Cardiac septum (tissue), 1 donor: ENCODE measurements at regions of chr4 and their contacts with region 1.

Region 1: GRCh38 chr4:101724093-101724492 is 66.4 kb upstream of the BANK1 start:
- DNase-seq: no peak

Region 2: GRCh38 chr4:101356928-101357327 is 367.2 kb before region 1 on chr4:
- intact Hi-C with region 1: loop called (anchors 10 kb)
- DNase-seq: no peak

Region 3: GRCh38 chr4:101693842-101694398 is 30.2 kb before region 1 on chr4:
- intact Hi-C with region 1: no loop called
- DNase-seq: no peak

Region 4: DNA sequence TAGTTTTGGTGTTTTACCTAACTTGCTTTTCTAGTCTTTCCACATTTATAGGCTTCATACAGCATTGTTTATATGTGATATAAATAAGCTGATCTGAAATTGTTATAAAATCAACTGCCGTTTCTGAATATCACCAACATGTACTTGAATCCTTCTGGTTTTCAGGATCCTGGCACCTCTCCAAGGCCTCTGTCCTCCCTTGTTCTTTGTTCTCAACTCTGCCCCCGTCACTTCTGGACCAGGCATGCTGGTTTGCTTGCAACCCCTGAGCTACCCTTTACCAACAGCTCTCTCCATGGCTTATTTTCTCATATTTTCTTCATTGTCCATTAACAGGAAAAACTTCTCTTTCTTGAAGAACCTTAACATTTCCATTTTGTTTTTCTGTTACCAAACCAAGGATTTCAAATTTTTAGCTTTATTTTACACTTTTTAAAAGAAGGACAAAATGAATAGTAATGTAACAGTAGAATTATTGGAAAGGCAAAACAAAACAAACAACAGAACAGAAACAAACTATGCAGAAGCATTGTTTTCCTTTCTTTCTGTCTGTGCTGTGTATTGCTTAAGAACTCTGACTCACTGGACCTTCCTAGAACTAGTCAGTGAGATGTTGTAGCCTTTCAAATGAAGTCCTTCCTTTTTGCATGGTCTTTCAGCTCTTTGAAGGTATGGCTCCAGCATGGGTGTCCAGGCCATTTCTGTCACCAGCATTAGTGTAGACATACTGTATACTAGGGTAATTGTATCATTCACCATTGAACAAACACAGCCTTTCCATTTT is 111.2 kb after region 1 on chr4:
- intact Hi-C with region 1: no loop called
- DNase-seq: no peak